Breast epithelium (tissue), 4 donors: ENCODE measurements at regions of chr9 and their contacts with region 1.

Region 1: GRCh38 chr9:102558624-102559023 is 436.5 kb upstream of the CYLC2 start:
- DNase-seq: no peak
- H3K4me3 ChIP-seq: no peak overlapping the region
- H3K27ac ChIP-seq: no peak overlapping the region
- H3K4me1 ChIP-seq: no peaks in the 10 kb centered on the region
- H3K27me3 ChIP-seq: no peaks in the 10 kb centered on the region
- CTCF ChIP-seq: no peak
- POLR2A ChIP-seq: no peak

Region 2: GRCh38 chr9:102841376-102841775 is 282.8 kb after region 1 on chr9:
- intact Hi-C with region 1: loop called (anchors 5 kb)
- DNase-seq: no peak
- H3K4me3 ChIP-seq: no peak overlapping the region
- H3K27ac ChIP-seq: no peak overlapping the region
- H3K4me1 ChIP-seq: no peaks in the 10 kb centered on the region
- H3K27me3 ChIP-seq: no peaks in the 10 kb centered on the region
- CTCF ChIP-seq: no peak
- POLR2A ChIP-seq: no peak